Mucosa of descending colon (tissue), 3 donors: ENCODE measurements at regions of chr4 and their contacts with region 1.

Region 1: GRCh38 chr4:89254847-89255246 is 52.8 kb downstream of the GPRIN3 start:
- DNase-seq: peak in 1 of 3 donors; percentile 35
- ATAC-seq: peak; percentile 76
- H3K4me3 ChIP-seq: no peak overlapping the region
- H3K4me1 ChIP-seq: peaks cover 7% of the 10 kb centered on the region
- CTCF ChIP-seq: peak; percentile 52

Region 2: DNA sequence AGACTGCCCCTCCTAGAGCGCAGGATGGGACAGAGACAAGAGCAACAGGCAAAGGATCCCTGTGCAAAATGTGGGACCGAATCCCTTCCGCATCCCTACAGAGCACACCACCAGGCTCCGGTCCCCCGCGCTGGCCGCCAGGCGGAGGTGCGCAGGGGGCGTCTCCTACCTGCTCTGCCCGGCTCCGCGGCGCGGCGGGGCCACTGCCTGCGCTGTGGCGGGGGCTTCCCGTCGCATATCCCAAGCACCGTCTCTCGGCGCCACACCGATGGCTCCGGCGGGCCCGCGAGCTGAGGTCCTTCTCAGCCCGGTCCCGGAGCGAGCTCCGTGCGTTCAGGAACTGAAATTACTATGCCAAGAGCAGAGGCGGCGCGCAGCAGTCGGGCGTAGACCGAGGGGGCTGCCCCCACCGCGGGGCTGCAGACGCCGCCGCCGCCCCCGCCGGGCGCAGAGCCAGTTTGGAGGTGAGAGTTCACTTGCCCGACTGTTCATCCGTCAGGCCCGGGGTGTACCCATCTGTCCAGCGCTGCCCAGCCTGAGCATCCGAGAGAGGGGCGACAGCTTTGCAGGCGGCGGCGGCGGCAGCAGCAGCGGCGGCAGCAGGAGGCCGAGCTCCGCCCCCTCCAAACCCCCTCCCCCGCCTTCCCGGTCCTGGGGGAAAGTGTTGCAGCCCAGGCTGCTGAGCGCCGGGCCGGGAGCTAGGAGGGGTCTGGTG is 52.8 kb after region 1 on chr4 and contains the start of gene GPRIN3:
- intact Hi-C with region 1: loop called in 1 of 2 experiments (anchors 10 kb)
- DNase-seq: peak; percentile 72 to 84 (median 82)
- ATAC-seq: peak; percentile 69
- H3K4me3 ChIP-seq: peak within 1 kb of the TSS; percentile 65
- H3K4me1 ChIP-seq: peaks cover 23% of the 10 kb centered on the region
- CTCF ChIP-seq: no peak
- total RNA-seq, gene GPRIN3: 6.0 to 23.8 (median 23.7) TPM